Activated CD4-positive, alpha-beta T cell treated with anti-CD3 and anti-CD28 coated beads for 36 hours (primary cell): ENCODE measurements at regions of chr14 and their contacts with region 1.

Region 1: DNA sequence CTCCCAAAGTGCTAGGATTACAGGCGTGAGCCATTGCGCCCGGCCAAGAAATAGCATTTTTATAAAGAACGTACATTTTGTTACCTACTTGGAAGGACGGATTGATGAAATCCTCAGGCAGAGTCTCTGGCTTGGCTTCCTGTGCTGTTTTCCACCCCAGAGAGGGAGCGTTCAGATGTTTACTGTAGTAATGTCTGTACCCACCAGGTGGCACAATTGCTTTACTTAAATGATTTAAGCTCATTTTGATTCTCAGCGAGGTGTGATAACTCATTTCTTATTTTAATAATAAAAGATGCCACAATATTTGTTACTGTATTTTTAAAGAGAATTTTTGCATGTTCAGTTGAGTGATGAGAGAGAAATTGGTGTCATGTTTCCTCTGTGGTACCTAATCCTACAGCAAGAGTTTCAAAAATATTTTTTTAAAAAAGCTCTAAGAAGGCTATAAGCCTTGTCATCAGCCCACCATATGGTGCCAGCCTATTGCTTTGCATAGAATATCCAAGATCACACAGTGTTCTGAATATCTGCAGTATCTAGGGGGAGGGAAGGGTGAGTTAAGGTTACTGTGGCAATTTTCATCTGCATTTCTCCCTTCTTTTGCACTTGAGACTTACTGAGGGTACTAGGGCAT is 82.6 kb upstream of the TRAF3 start:
- DNase-seq: peak; percentile 68
- ATAC-seq: peak; percentile 73
- H3K4me3 Mint-ChIP-seq: no peak overlapping the region
- H3K27ac Mint-ChIP-seq: no peak overlapping the region
- H3K4me1 Mint-ChIP-seq: peaks cover 30% of the 10 kb centered on the region
- H3K27me3 Mint-ChIP-seq: no peaks in the 10 kb centered on the region

Region 2: DNA sequence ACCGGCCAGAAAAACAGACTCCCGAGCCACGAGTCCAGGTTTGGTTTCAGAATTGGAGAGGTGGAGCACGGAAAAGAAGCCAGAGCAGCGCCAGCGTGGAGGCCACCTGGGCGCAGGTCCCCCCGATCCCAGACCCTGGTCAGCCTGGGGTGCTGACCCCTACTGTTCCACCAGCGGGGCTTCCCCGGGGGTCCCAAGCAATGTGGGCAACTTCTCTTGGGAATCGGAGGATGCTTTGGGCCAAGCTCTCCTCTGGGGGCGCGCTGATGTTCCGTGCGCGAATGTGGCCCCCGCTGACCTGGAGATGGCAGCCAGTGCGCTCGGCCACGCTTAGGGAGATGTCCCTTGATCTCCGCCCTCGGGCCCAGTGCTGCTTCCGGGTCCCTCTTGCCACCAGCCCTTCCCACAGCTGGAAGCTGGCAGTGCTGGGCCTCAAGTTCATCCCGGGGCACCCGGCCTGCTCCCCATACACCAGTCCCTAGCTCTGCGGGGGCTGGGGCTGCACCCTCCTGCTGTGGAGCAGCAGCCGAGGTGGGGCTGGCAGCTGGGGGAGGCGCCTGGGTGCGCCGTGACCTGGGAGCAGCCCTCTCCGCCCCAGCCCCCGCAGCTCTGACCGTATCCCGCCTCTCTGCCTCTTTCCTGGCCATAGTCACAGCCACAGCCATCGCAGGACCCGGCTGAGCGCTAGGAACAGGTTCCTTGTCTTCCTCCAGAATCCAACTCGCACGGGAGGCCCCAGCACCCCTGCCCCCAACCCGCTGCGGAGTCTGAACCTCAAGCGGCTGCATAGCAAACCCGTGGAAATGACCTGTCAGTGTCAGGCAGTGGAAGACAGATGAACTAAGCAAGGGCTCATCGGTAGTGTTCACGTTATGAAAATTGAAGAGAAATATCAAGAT is 11.0 kb before region 1 on chr14:
- CTCF ChIA-PET with region 1: interaction called, 20 read pairs
- POLR2A ChIA-PET with region 1: no interaction called
- intact Hi-C with region 1: no loop called
- DNase-seq: no peak
- ATAC-seq: no peak
- H3K4me3 Mint-ChIP-seq: no peak overlapping the region
- H3K27ac Mint-ChIP-seq: no peak overlapping the region
- H3K4me1 Mint-ChIP-seq: peaks cover 7% of the 10 kb centered on the region
- H3K27me3 Mint-ChIP-seq: no peaks in the 10 kb centered on the region

Region 3: DNA sequence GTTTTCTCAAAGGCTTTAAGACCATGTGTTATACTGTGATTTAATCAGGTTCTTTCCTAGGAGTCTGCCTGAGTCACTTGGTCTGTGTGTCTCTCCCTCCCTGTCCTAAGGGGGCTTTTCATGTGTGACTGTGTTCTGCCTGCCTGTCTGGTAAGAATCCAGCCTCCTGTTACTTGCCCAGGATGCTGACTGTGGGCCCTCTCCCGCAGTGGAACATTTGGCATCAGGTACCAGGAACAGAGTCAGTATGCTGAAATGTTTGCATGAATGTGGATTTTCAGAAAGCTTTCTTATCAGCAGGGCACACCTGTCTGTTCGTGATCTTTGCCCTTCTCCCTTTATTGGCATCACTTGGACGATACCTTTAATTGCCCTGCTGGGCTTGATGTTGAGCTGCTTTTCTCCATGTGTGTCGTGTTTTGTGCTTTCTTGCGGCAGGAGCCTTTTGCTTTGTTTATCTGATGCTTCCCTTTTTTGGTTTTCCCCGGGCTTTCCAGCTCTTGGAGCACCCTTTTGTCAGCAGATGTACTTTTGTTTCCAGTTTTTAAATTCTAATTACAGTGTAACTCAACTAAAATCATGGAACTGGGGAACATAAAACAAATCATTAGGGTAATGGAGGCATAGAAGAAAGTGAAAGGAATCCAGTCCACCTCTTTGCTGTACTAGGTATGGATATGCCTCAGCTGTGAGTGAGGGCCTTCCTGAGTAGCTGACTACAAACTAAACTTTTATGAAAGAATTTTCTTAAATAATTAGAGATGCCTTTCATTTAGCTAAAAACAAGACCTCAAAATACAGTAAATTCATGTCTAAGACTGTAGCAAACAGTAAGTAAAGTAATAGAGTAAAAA is 155.1 kb after region 1 on chr14:
- CTCF ChIA-PET with region 1: interaction called, 4 read pairs
- POLR2A ChIA-PET with region 1: no interaction called
- intact Hi-C with region 1: loop called in 1 of 2 experiments (anchors 5 kb)
- DNase-seq: no peak
- ATAC-seq: no peak
- H3K4me3 Mint-ChIP-seq: no peak overlapping the region
- H3K27ac Mint-ChIP-seq: peak overlapping the region; percentile 64
- H3K4me1 Mint-ChIP-seq: peaks cover 17% of the 10 kb centered on the region
- H3K27me3 Mint-ChIP-seq: no peaks in the 10 kb centered on the region

Region 4: DNA sequence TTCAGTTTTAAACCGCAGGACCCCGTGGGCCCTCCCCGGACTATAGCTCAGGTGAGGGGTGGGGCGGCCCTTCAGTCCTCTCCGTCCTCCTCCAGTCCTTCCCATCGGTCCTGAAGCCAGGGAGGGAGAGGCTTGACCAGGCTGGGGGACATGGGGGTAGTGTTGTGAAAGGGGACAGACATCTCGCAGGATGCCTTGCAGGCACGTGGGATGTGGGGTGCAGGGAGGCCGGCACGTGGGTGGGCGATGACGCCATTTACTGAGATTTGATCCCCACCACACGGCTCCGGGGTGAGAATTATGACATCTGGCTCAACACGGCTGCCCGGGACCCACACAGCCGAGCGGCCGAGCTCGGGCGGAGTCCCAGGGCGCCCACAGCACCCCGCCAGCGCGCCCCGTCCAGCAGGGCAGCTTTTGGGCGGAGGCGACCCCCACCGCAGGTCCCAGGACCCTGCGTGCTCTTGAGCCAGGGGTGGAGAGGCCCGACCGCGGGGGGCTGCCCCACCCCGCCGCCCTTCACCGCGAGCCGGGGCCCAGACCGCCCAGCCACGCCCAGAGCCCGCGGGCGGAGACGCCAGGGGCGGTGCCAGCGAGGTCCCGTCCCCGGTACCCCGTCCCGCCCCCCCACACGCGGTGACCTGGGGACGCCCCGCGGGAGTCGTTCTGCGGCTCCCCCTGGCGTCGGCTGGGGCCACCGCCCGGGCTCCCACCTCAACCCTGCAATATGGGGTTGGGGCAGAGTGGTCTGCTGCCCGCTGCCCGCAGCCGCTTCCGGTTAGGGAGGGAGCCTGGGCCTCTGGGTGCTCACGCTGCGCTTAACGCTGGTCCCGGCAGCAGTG is 396.6 kb after region 1 on chr14:
- CTCF ChIA-PET with region 1: no interaction called
- POLR2A ChIA-PET with region 1: no interaction called
- intact Hi-C with region 1: loop called in 1 of 2 experiments (anchors 1 kb)
- DNase-seq: peak; percentile 88
- ATAC-seq: peak; percentile 91
- H3K4me3 Mint-ChIP-seq: peak overlapping the region; percentile 12
- H3K27ac Mint-ChIP-seq: no peak overlapping the region
- H3K4me1 Mint-ChIP-seq: peaks cover 3% of the 10 kb centered on the region
- H3K27me3 Mint-ChIP-seq: no peaks in the 10 kb centered on the region